PC-9 (cell line): ENCODE measurements at regions of chr6 and their contacts with region 1.

Region 1: GRCh38 chr6:3162565-3163247 is 5.4 kb upstream of the TUBB2A start:
- DNase-seq: peak; percentile 66 to 79
- H3K4me3 ChIP-seq: peak overlapping the region; percentile 58; the same call in 1 of the 2 replicates
- H3K27ac ChIP-seq: peak overlapping the region; percentile 88
- H3K4me1 ChIP-seq: peaks cover 51% of the 10 kb centered on the region
- H3K27me3 ChIP-seq: no peaks in the 10 kb centered on the region
- CTCF ChIP-seq: no peak

Region 2: GRCh38 chr6:3031857-3032640 is 130.7 kb before region 1 on chr6:
- CTCF ChIA-PET with region 1: no interaction called
- POLR2A ChIA-PET with region 1: interaction called, 13 read pairs
- intact Hi-C with region 1: no loop called
- DNase-seq: no peak
- H3K4me3 ChIP-seq: no peak overlapping the region
- H3K27ac ChIP-seq: no peak overlapping the region
- H3K4me1 ChIP-seq: no peaks in the 10 kb centered on the region
- H3K27me3 ChIP-seq: no peaks in the 10 kb centered on the region
- CTCF ChIP-seq: no peak

Region 3: DNA sequence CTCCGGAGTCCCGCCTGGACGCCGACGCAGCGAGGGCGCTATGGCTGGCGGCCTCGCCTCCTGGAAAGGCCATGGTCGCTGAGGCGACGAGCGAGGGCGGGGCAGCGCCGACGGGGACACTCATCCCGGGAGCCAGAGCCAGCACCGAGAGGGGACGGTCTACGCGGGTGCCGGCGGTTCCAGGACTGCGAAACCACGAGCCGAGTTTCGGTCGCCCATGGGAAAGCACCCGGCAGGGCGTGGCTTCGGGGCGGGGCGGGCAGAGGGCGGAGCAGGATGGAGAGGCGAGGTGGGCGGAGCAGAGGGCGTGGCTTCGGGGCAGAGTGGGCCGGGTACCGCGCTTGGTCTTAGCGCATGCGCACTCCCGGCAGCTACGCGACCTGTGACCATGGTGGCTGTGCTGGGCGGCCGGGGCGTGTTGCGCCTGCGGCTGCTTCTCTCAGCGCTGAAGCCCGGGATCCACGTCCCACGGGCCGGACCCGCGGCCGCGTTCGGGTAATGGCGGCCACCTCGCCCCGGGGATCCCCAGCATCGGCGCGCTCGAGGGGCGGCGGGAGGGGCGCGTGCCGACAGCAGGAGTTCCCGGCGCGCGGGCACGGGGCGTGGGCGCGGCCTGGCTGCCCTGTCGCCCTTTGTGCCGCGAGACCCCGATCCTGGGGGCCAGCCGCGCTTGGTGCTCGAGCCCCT is 44.2 kb before region 1 on chr6 and contains the start of gene BPHL:
- CTCF ChIA-PET with region 1: no interaction called
- POLR2A ChIA-PET with region 1: interaction called, 20 read pairs
- intact Hi-C with region 1: no loop called
- DNase-seq: peak; percentile 71 to 98
- H3K4me3 ChIP-seq: peak within 1 kb of the TSS; percentile 84
- H3K27ac ChIP-seq: peak within 1 kb of the TSS; percentile 97
- H3K4me1 ChIP-seq: peaks cover 22% of the 10 kb centered on the region
- H3K27me3 ChIP-seq: no peaks in the 10 kb centered on the region
- CTCF ChIP-seq: no peak
- total RNA-seq, gene BPHL: 23.7 and 24.5 TPM in 2 replicates

Region 4: GRCh38 chr6:3209114-3210023 is 46.7 kb after region 1 on chr6:
- CTCF ChIA-PET with region 1: interaction called, 9 read pairs
- POLR2A ChIA-PET with region 1: interaction called, 4 read pairs
- intact Hi-C with region 1: loop called (anchors 1 kb)
- DNase-seq: peak; percentile 87 to 98
- H3K4me3 ChIP-seq: peak overlapping the region; percentile 19; the same call in 1 of the 2 replicates
- H3K27ac ChIP-seq: peak overlapping the region; percentile 83
- H3K4me1 ChIP-seq: peaks cover 37% of the 10 kb centered on the region
- H3K27me3 ChIP-seq: no peaks in the 10 kb centered on the region
- CTCF ChIP-seq: no peak

Region 5: GRCh38 chr6:3251462-3252314 is 89.0 kb after region 1 on chr6:
- CTCF ChIA-PET with region 1: interaction called, 7 read pairs
- POLR2A ChIA-PET with region 1: interaction called, 8 read pairs
- intact Hi-C with region 1: loop called (anchors 1 kb)
- DNase-seq: peak; percentile 71 to 89
- H3K4me3 ChIP-seq: peak overlapping the region; percentile 5; the same call in 1 of the 2 replicates
- H3K27ac ChIP-seq: 0 out of 2 replicates have a peak overlapping the region, but pooled peaks have one; percentile 40
- H3K4me1 ChIP-seq: peaks cover 15% of the 10 kb centered on the region
- H3K27me3 ChIP-seq: no peaks in the 10 kb centered on the region
- CTCF ChIP-seq: peak; percentile 93